ENCODE measurements at regions of chr11 and their contacts with region 1.

Region 1: DNA sequence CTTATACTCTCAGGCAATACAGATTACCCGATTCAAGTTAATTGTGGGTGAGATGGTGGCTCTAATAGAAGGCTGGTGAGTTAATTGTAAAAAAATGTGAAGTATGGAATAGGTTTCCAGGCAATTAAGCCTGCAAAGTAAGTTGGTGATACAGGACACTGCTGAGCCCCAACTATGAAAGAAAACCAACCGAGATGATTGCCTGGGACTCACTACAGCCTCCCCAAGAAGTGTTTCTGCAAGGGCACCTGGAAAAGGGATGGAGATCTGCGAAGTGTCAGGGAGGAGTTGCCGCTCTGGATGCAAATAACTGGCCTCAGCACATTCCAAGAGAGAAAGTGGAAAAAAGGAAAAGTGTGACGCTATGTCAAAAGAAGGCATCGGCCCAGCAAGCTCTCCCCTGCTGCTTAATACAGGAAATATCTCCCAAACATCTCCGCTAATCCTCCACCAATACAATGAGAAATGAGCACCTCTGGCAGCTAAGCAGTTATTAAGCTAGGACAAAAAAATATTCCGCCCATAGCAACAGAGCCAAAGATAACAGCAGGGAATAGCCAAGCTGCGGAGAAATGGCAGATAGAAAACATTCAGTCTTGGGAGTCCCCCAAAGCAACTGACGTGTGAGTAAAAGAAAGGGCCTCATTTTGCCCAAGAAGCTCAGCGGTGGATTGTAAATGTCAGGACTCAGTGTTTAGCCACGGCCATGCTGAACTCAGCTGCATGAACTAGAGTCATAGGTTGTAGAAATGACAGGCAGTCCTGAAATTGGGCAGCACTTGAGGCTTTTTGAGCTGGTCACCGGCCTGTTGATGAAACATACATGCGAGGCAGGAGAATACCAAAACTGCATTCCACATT is 133.7 kb downstream of the SNX19 start:
- DNase-seq: no peak
- ATAC-seq: peak; percentile 33 to 39
- H3K4me3 ChIP-seq: no peak overlapping the region
- H3K27ac ChIP-seq: peak overlapping the region in 3 of 4 donors; percentile 10 to 27 (median 14)
- H3K4me1 ChIP-seq: peaks cover 9% of the 10 kb centered on the region in 2 donors
- H3K27me3 ChIP-seq: no peaks in the 10 kb centered on the region
- CTCF ChIP-seq: no peak
- POLR2A ChIP-seq: no peak

Region 2: GRCh38 chr11:130817330-130817944 is 34.8 kb after region 1 on chr11:
- in situ Hi-C with region 1: no loop called
- intact Hi-C with region 1: loop called (anchors 5 kb)
- DNase-seq: peak; percentile 17 to 49
- ATAC-seq: peak; percentile 50 to 57
- H3K4me3 ChIP-seq: no peak overlapping the region
- H3K27ac ChIP-seq: peak overlapping the region in 1 of 4 donors; percentile 29
- H3K4me1 ChIP-seq: no peaks in the 10 kb centered on the region
- H3K27me3 ChIP-seq: no peaks in the 10 kb centered on the region
- CTCF ChIP-seq: no peak
- POLR2A ChIP-seq: no peak

Measured in gastrocnemius medialis (tissue), 4 donors.